PC-9 (cell line): ENCODE measurements at regions of chr2 and their contacts with region 1.

Region 1: GRCh38 chr2:121400201-121400600 is 115.2 kb upstream of the TFCP2L1 start:
- DNase-seq: no peak
- H3K4me3 ChIP-seq: no peak overlapping the region
- H3K27ac ChIP-seq: no peak overlapping the region
- H3K4me1 ChIP-seq: no peaks in the 10 kb centered on the region
- H3K27me3 ChIP-seq: no peaks in the 10 kb centered on the region
- CTCF ChIP-seq: no peak

Region 2: GRCh38 chr2:121707920-121708361 is 307.7 kb after region 1 on chr2:
- CTCF ChIA-PET with region 1: no interaction called
- POLR2A ChIA-PET with region 1: interaction called, 10 read pairs
- intact Hi-C with region 1: no loop called
- DNase-seq: peak; percentile 51 to 76
- H3K4me3 ChIP-seq: no peak overlapping the region
- H3K27ac ChIP-seq: peak overlapping the region; percentile 46
- H3K4me1 ChIP-seq: peaks cover 8% of the 10 kb centered on the region
- H3K27me3 ChIP-seq: no peaks in the 10 kb centered on the region
- CTCF ChIP-seq: no peak

Region 3: GRCh38 chr2:121722479-121722878 is 322.3 kb after region 1 on chr2:
- CTCF ChIA-PET with region 1: no interaction called
- POLR2A ChIA-PET with region 1: no interaction called
- intact Hi-C with region 1: loop called (anchors 1 kb)
- DNase-seq: peak in 1 of 2 experiments; percentile 70
- H3K4me3 ChIP-seq: no peak overlapping the region
- H3K27ac ChIP-seq: peak overlapping the region; percentile 42
- H3K4me1 ChIP-seq: peaks cover 13% of the 10 kb centered on the region; the same call in 1 of the 2 replicates
- H3K27me3 ChIP-seq: no peaks in the 10 kb centered on the region
- CTCF ChIP-seq: no peak

Region 4: GRCh38 chr2:121748202-121748601 is 348.0 kb after region 1 on chr2:
- CTCF ChIA-PET with region 1: interaction called, 4 read pairs
- POLR2A ChIA-PET with region 1: no interaction called
- intact Hi-C with region 1: loop called (anchors 1 kb)
- DNase-seq: peak in 1 of 2 experiments; percentile 41
- H3K4me3 ChIP-seq: no peak overlapping the region
- H3K27ac ChIP-seq: no peak overlapping the region
- H3K4me1 ChIP-seq: no peaks in the 10 kb centered on the region
- H3K27me3 ChIP-seq: no peaks in the 10 kb centered on the region
- CTCF ChIP-seq: peak; percentile 66